GM18951 (cell line): ENCODE measurements at regions of chr15 and their contacts with region 1.

Region 1: GRCh38 chr15:76529911-76530310 is 193.3 kb downstream of the ISL2 start:
- POLR2A ChIP-seq: no peak

Region 2: GRCh38 chr15:76393614-76394013 is 136.3 kb before region 1 on chr15:
- in situ Hi-C with region 1: loop called (anchors 10 kb)
- POLR2A ChIP-seq: no peak